ENCODE measurements at regions of chr6 and their contacts with region 1.

Region 1: DNA sequence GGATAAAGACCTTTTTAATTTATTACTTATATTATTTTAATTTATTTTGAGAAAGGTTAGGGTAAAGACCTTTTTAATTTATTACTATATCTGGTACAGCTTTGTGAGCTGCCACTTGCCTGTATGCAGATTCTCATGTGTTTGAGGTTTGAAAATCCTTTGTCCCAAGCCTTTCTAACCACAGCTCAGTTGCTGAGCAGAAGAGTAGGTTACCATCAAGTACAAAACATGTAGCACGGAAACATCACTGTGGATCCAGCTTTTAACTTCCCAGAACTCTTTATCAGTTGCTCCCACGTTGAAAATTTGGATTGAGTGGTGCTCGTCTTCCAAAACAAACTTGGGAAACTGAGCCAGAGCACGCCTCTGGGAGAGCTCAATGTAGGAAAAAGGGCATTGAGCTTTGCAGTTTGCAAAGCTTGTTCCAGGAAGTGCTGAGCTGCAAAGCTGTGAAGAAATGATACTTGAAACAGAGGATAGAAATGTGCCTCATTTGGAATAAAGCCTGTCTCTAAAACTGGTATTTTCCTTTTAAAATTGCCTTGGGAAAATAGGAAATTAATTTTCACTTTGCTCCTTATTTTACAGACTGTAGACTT is 89.0 kb downstream of the RREB1 start:
- DNase-seq: no peak
- H3K4me3 ChIP-seq: no peak overlapping the region
- H3K27ac ChIP-seq: no peak overlapping the region
- H3K4me1 ChIP-seq: peaks cover 4% of the 10 kb centered on the region
- CTCF ChIP-seq: no peak

Region 2: DNA sequence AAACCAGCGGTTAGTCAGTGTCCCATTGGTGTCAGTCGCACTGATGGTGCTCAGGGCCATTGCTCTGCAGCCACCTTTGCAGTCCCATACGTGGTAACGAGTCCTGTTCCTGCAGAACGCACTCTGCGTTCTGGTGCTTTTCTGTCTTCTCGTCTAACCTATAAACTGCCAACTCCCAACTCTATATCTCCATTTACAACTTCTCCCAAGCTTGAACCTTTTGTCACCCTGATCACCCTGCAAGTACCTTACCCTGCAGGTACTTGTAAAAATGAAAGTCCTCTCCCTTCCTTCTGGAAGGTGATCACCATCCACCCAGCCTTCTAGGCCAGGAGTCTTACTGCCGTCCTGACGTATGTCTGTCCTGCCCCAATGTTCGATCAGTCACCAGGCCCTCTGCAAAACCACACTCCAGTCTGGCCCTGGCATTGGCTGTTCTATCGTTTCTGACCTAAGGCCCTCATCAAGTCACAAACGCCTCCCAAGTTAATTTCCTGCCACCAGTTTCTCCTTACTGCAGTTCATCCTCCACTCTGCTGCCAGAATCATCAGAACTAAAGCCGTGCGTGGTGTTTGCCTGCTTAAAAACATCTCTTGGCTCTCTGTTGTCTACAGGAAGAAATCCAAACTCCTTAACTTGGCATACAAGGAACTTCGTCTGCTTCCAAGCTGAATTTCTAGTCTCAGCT is 81.1 kb before region 1 on chr6:
- CTCF ChIA-PET with region 1: no interaction called
- POLR2A ChIA-PET with region 1: interaction called, 11 read pairs
- intact Hi-C with region 1: no loop called
- DNase-seq: no peak
- H3K4me3 ChIP-seq: no peak overlapping the region
- H3K27ac ChIP-seq: no peak overlapping the region
- H3K4me1 ChIP-seq: no peaks in the 10 kb centered on the region
- CTCF ChIP-seq: no peak

Measured in OCI-LY7 (cell line).